Heart left ventricle (tissue), 16 donors: ENCODE measurements at regions of chr11 and their contacts with region 1.

Region 1: DNA sequence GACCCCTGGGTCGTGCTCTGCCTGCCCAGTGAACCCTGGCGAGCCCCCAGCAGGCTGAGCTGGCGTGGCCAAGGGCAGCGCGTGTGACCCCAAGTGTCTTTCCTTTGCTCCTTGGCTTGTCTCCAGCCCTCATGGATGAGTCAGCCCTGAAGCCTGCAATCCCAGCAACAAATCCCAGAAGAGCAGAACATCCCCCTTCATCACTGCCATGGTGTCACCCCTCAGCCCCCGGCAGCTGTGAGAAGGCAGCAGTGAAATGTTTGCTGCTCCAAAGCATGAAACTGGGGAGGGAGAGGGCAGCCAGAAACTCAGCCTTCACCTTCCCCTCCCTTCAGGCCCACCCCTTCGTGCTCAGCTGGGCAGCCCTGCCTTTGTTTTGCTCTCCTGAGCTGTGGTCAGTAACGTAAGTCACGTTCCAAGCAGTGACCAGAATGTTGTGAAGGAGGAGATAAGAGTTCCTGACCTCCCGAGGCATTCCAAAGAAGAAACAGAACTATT is 29.8 kb downstream of the ADAMTS15 start:
- DNase-seq: peak; percentile 78 to 92 (median 86)
- ATAC-seq: peak; percentile 54 to 82 (median 75)
- H3K4me3 ChIP-seq: no peak overlapping the region
- H3K27ac ChIP-seq: peak overlapping the region; percentile 73 to 88 (median 84)
- H3K4me1 ChIP-seq: peaks cover 11 to 57% (median 47%) of the 10 kb centered on the region in 12 donors
- H3K27me3 ChIP-seq: no peaks in the 10 kb centered on the region
- CTCF ChIP-seq: no peak
- POLR2A ChIP-seq: no peak

Region 2: GRCh38 chr11:130454491-130455252 is 23.6 kb before region 1 on chr11:
- intact Hi-C with region 1: loop called in 2 of 10 experiments (anchors 2 kb)
- DNase-seq: peak in 2 of 5 donors; percentile 20 to 39
- ATAC-seq: peak in 3 of 4 donors; percentile 15 to 38 (median 30)
- H3K4me3 ChIP-seq: peak overlapping the region in 1 of 12 donors; percentile 1
- H3K27ac ChIP-seq: peak overlapping the region in 11 of 12 donors; percentile 65 to 91 (median 81)
- H3K4me1 ChIP-seq: peaks cover 0 to 90% (median 67%) of the 10 kb centered on the region in 12 donors
- H3K27me3 ChIP-seq: peaks cover 0 to 6% (median 0%) of the 10 kb centered on the region in 9 donors
- CTCF ChIP-seq: no peak
- POLR2A ChIP-seq: no peak